HEK293 (cell line): ENCODE measurements at regions of chr19 and their contacts with region 1.

Region 1: DNA sequence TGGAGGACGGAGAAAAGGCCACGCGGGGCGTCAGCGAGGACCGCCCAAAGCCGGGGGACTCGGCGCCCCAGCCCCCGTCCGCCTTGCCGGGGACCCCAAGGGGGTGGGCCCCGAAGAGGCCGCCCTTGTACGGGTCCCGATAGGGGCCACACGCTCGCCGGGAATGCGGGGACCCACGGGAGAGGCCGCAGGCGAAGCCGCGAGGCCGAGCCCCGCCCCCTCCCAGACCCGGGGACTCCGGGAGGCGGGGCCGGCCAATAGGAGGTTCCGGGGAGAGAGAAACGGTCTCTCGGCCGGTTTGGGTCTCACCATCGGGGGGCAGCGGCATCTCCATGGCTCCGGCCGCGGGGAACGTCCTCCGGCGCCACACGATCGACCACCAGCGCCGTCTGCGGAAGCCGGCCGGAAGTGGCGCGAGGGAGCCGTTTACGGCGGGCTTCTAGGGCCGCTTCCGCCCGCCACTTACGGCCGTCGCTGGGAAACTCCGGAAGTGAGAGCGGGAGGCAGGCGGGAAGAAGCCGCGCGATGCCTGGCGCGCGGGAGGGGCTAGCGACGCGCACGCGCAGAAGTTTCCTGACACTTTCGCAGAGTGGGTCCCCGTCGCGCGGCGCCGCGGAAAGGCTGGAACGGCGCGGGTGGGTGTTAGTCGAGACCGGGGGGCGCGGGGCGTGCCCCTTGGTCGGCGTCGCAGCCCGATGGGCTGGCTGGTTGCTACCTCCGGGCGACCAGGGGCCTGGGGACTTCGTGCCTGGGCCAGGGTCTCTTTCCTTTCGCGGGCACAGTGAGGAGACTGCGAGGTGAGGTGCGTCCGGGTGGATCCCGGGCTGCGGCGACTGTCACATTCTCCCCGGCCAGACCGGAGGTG is at the start of gene CHERP:
- H3K4me3 ChIP-seq: peak within 1 kb of the TSS; percentile 96
- H3K27ac ChIP-seq: peak within 1 kb of the TSS; percentile 78
- H3K4me1 ChIP-seq: peaks cover 2% of the 10 kb centered on the region; the same call in 1 of the 2 replicates
- CTCF ChIP-seq: peak; percentile 17; the same call in 1 of the 2 replicates

Region 2: DNA sequence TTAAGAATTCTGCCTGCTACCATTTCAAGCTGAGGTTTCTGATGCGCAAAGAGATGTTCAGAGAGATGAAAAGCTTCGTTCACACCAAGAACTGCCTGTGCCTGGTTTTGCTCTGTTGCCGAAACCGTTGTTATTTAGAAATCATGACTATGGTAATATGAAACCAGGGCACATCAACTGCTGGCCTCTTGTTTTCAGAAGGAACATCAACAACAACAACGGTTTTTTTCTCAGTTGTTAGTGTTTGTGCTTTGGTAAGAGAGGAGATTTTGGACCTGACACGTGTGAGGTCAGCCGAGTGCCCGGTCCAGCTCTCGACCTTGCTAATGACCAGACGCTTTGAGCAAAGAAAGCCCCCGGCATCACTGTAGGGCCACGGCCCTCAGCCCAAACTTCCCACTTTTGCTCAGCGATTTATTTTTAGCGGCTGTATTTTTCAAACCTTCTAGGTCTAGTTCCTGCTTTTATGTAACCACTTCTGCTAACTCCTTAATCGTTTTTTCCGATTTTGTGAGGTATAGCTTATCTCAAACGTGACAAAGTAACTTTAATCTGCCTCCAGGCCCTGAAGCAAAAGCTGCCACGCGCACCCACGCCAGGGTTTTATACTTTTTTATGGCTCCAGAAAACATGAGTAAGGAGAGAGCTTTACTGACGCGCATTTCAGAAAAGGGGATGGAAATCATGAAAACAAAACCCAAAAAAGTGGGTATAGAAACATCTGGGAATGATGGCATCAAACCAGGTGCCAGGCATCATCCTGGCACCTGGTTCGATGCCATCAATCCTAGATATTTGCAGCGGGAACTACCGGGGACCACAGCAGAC is 175.6 kb before region 1 on chr19:
- CTCF ChIA-PET with region 1: no interaction called
- POLR2A ChIA-PET with region 1: no interaction called
- H3K4me3 ChIP-seq: no peak overlapping the region
- H3K27ac ChIP-seq: no peak overlapping the region
- H3K4me1 ChIP-seq: no peaks in the 10 kb centered on the region; the same call in 1 of the 2 replicates
- CTCF ChIP-seq: no peak

Region 3: DNA sequence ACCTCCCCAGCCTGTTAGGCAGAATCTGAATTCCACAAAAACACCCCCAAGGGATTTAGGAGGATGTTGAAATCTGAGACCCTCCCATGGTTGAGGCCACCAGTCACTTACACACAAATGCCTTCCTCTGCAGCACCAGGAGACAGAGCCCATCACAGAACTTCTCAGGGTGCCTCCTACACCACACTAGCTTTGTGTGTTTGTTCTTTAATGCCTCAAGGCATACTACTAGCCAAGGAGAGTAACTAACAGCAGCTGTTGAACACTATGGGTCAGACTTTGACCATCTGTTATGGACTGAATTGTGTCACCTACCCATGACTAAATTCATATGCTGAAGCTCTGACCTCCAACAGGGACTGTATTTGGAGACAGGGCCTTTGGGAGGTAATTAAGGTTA is 95.3 kb after region 1 on chr19:
- CTCF ChIA-PET with region 1: no interaction called
- POLR2A ChIA-PET with region 1: interaction called, 16 read pairs
- H3K4me3 ChIP-seq: no peak overlapping the region
- H3K27ac ChIP-seq: no peak overlapping the region
- H3K4me1 ChIP-seq: no peaks in the 10 kb centered on the region
- CTCF ChIP-seq: no peak